ENCODE measurements at regions of chr3 and their contacts with region 1.

Region 1: GRCh38 chr3:20380295-20380694 is 194.3 kb upstream of the SGO1 start:
- DNase-seq: no peak
- H3K4me3 ChIP-seq: no peak overlapping the region
- H3K27ac ChIP-seq: no peak overlapping the region
- H3K4me1 ChIP-seq: no peaks in the 10 kb centered on the region
- H3K27me3 ChIP-seq: no peaks in the 10 kb centered on the region
- CTCF ChIP-seq: no peak

Region 2: GRCh38 chr3:20154931-20155330 is 225.4 kb before region 1 on chr3:
- CTCF ChIA-PET with region 1: no interaction called
- POLR2A ChIA-PET with region 1: interaction called, 10 read pairs
- intact Hi-C with region 1: no loop called
- DNase-seq: no peak
- H3K4me3 ChIP-seq: no peak overlapping the region
- H3K27ac ChIP-seq: no peak overlapping the region
- H3K4me1 ChIP-seq: no peaks in the 10 kb centered on the region
- H3K27me3 ChIP-seq: no peaks in the 10 kb centered on the region
- CTCF ChIP-seq: no peak

Region 3: GRCh38 chr3:20222274-20222673 is 158.0 kb before region 1 on chr3:
- CTCF ChIA-PET with region 1: no interaction called
- POLR2A ChIA-PET with region 1: no interaction called
- intact Hi-C with region 1: no loop called
- DNase-seq: no peak
- H3K4me3 ChIP-seq: no peak overlapping the region
- H3K27ac ChIP-seq: no peak overlapping the region
- H3K4me1 ChIP-seq: no peaks in the 10 kb centered on the region
- H3K27me3 ChIP-seq: no peaks in the 10 kb centered on the region
- CTCF ChIP-seq: no peak

Region 4: DNA sequence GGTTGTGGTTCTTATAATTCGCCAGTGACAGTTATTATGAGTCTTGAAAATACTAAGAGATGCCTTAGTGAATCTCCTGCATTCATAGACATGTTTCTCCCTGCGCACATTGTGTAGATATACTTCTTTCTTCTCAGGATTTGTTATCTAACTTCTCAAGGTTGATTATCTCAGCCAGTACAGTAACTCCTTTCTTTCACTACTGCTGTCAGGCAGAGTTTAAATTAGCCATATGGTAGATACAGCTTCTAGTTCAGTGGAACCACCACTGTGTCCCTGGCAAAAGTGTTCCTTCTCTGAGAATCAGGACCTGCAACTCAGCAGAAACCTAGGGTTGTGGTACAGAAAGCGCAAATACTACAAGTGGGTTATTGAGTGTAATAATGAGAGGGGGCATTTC is 19.3 kb before region 1 on chr3:
- CTCF ChIA-PET with region 1: no interaction called
- POLR2A ChIA-PET with region 1: no interaction called
- intact Hi-C with region 1: no loop called
- DNase-seq: no peak
- H3K4me3 ChIP-seq: no peak overlapping the region
- H3K27ac ChIP-seq: no peak overlapping the region
- H3K4me1 ChIP-seq: no peaks in the 10 kb centered on the region
- H3K27me3 ChIP-seq: peaks cover 4% of the 10 kb centered on the region; the same call in 1 of the 2 replicates
- CTCF ChIP-seq: no peak

Measured in PC-9 (cell line).